MCF 10A (cell line): ENCODE measurements at regions of chr13 and their contacts with region 1.

Region 1: GRCh38 chr13:49996951-49997895 is at the start of gene TRIM13:
- DNase-seq: peak; percentile 91
- H3K4me3 Mint-ChIP-seq: peak within 1 kb of the TSS; percentile 89
- H3K27ac Mint-ChIP-seq: peak within 1 kb of the TSS; percentile 80
- H3K4me1 Mint-ChIP-seq: peaks cover 16% of the 10 kb centered on the region
- H3K27me3 Mint-ChIP-seq: no peaks in the 10 kb centered on the region
- CTCF ChIP-seq: peak; percentile 79
- total RNA-seq, gene TRIM13: 17.5 and 19.0 TPM in 2 replicates

Region 2: DNA sequence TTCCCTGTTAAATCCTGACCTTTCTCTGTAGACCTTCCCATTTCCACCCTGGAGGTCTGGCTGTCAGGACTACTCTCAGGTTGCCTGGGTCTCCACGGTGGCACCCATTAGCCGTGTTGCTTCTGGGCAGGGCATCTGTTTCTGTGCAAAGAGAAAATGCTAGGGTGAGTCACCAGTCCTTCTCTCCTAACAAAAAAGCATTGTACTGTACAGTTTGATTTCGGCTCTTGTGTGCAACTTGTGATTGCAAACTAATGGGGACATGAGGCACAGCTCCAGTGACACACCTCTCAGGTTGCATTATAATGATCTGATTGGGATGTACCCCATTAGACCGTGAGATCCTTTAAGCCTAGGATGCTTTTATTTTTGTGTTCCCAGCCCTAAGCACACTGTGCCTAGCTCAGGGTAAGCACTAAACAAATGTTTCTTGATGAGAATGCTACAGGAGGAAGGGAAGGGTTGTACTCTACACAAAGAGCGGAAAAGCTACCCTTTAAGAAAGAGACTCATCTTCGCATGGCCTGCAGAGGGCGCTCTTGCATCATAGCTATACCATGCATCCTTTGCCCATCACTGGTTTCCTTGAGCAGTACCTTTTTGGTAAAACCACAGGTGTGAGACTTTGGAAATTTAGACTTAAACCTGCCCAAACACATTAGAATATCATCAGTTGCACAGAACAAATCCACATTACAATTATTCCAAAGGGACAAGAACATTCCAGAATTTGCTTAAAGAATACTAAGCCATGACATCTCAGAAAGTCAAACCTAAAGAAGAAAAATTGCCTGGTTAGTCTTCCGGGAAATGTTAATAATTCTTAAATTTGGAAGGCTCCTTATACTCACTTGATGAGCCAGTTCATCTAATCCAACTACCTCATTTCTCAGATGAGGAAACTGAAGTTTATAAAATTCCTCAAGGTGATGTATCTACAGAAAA is 20.6 kb before region 1 on chr13:
- CTCF ChIA-PET with region 1: interaction called, 14 read pairs
- POLR2A ChIA-PET with region 1: interaction called, 6 read pairs
- intact Hi-C with region 1: no loop called
- DNase-seq: peak; percentile 85
- H3K4me3 Mint-ChIP-seq: no peak overlapping the region
- H3K27ac Mint-ChIP-seq: peak overlapping the region; percentile 21
- H3K4me1 Mint-ChIP-seq: peaks cover 11% of the 10 kb centered on the region
- H3K27me3 Mint-ChIP-seq: no peaks in the 10 kb centered on the region
- CTCF ChIP-seq: peak; percentile 88

Region 3: DNA sequence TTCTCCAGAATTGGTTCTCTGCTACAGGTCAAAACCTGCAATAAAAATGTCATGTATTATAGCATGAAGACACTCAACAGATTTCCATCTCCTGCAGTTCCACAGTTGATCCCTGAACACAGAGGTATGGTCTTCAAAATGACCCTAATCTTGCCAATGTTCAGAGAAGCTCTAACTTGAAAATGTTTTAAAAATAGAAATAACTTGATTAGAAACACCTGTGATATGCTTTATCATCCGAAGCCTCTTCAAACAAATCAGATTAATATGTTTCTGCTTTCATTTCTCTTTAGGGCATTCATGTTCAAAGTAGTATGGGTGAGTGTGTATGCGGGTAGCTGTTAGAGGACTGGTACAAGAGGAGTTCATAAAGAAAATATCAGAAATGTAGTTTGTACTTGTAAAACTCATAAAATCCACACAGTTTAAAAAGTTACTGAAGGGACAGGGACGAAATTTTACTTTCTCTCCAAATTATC is 78.4 kb after region 1 on chr13:
- CTCF ChIA-PET with region 1: interaction called, 8 read pairs
- POLR2A ChIA-PET with region 1: interaction called, 201 read pairs
- intact Hi-C with region 1: no loop called
- DNase-seq: peak; percentile 47
- H3K4me3 Mint-ChIP-seq: peak overlapping the region; percentile 97
- H3K27ac Mint-ChIP-seq: peak overlapping the region; percentile 99
- H3K4me1 Mint-ChIP-seq: peaks cover 10% of the 10 kb centered on the region
- H3K27me3 Mint-ChIP-seq: no peaks in the 10 kb centered on the region
- CTCF ChIP-seq: no peak

Region 4: GRCh38 chr13:50344717-50345116 is 347.5 kb after region 1 on chr13:
- CTCF ChIA-PET with region 1: no interaction called
- POLR2A ChIA-PET with region 1: no interaction called
- intact Hi-C with region 1: no loop called
- DNase-seq: no peak
- H3K4me3 Mint-ChIP-seq: no peak overlapping the region
- H3K27ac Mint-ChIP-seq: no peak overlapping the region
- H3K4me1 Mint-ChIP-seq: peaks cover 5% of the 10 kb centered on the region
- H3K27me3 Mint-ChIP-seq: no peaks in the 10 kb centered on the region
- CTCF ChIP-seq: no peak

Region 5: GRCh38 chr13:50668691-50669271 is 671.6 kb after region 1 on chr13:
- CTCF ChIA-PET with region 1: no interaction called
- POLR2A ChIA-PET with region 1: no interaction called
- intact Hi-C with region 1: no loop called
- DNase-seq: no peak
- H3K4me3 Mint-ChIP-seq: no peak overlapping the region
- H3K27ac Mint-ChIP-seq: no peak overlapping the region
- H3K4me1 Mint-ChIP-seq: peaks cover 21% of the 10 kb centered on the region
- H3K27me3 Mint-ChIP-seq: no peaks in the 10 kb centered on the region
- CTCF ChIP-seq: no peak